AG04449 (cell line): ENCODE measurements at regions of chrX and their contacts with region 1.

Region 1: DNA sequence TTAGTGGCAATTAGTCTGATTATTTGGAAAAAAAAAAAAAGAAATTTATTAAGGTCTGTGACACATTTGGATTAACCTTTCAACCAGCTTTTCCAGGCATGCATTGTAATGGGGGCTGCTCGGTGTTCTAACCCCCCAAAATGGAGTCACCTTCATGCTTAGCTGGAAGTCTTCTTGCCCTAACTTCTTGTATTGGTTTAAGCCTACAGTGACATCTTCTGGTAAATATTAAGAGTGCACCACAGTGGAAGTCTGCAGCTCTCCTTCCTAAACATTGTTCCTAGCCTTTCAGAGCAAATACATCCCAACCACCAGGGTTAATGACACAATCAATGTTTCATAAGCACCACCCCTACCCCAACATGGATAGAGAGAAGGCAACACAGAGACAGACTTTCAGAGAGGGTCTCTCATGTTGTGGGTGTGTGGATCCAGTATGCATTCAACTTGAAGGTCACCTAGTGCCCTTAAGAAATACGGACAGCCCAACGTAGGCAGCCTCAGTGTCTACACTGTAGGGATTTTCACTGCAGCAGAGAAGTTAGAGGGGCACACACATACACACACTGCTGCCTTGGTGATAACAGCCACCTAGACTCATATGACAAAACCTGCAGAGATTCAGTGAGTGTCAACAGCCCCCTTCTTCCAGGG is 142.9 kb upstream of the MBNL3 start:
- DNase-seq: no peak
- H3K4me3 ChIP-seq: no peak overlapping the region
- CTCF ChIP-seq: peak; percentile 17

Region 2: DNA sequence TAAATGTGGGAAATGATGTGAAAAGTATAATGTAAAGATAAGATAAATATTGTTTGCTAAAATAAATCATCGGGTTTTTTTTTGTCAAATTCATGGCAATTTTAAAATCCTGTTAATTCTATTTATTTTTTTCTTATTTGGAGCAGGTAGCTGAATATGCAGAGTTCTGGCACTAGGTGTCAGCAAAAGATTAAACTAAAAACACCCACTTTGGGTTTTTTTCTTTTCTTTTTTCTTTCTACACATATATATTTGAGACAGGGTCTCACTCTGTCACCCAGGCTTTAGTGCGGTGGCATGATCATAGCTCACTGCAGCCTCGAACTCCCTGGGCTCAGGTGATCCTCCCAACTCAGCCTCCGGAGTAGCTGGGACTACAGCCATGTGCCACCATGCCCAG is 405.5 kb before region 1 on chrX:
- CTCF ChIA-PET with region 1: interaction called, 18 read pairs
- POLR2A ChIA-PET with region 1: no interaction called
- DNase-seq: no peak
- H3K4me3 ChIP-seq: no peak overlapping the region
- CTCF ChIP-seq: no peak

Region 3: DNA sequence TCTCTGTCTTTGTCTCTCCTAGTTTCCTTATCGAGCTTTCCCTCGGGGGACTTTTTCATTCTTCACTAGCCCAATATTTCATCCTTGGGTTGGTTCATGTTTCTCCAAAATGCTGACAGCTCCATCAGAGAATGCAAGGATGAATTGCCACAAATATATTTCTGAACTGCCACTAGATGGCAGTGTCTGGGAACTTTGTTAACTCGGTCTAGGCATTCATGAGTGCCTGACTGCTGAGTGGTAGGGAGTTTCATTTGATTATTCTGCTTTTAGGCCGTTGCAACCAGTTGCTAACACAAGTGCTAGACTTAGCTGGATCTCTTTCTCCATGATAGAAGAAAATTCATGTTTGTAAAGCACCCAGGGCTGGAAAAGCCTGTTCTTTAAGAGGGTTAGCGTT is 338.9 kb before region 1 on chrX:
- CTCF ChIA-PET with region 1: interaction called, 22 read pairs
- POLR2A ChIA-PET with region 1: no interaction called
- DNase-seq: peak; percentile 12
- H3K4me3 ChIP-seq: no peak overlapping the region
- CTCF ChIP-seq: peak; percentile 33

Region 4: DNA sequence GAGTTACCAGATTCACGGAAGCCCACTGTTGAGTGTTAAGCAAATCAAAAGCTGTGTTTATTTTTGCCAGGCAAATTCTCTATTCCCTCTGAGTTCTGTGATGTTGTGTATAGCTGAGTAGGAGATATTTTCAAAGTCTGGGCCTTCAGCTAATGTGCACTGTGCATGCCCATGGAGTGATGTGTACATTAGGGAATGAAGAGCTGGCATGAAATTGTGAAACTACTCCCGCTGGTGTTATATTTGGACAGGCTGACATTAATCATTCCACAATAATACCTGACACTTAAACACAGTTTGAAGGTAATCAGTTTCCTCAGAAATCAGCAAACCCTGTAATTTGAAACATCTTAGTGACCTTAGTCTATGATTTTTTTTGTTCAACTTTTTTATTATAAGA is 54.8 kb before region 1 on chrX:
- CTCF ChIA-PET with region 1: no interaction called
- POLR2A ChIA-PET with region 1: no interaction called
- DNase-seq: no peak
- H3K4me3 ChIP-seq: no peak overlapping the region
- CTCF ChIP-seq: no peak

Region 5: DNA sequence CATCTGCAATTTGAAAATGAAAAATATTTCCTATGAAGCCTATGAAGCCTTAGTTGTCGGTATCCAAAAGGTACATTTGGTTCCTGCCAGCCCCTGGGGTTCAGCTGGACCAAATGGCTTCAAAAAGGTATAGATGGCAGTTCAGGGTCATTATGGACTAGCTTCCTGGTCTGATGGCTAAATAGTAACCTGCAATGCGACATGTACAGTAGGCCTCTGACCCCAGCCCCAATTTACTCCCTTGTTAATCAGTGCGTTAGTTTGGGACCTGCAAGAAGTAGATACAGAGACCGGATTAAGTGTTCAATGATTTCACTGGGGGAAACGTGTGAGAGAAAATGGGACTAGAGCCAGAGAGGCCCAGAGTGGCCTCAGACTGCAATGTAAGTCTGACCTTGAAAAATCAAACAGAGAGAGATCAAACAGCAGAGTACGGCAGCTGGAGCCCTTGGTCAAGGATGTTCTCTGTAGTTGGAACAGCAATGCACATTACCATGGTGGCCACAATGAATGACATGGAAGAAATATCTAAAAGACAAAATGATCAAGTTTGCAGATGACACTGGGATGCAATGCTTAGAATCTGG is 27.9 kb before region 1 on chrX:
- CTCF ChIA-PET with region 1: no interaction called
- POLR2A ChIA-PET with region 1: no interaction called
- DNase-seq: no peak
- H3K4me3 ChIP-seq: no peak overlapping the region
- CTCF ChIP-seq: no peak

Region 6: DNA sequence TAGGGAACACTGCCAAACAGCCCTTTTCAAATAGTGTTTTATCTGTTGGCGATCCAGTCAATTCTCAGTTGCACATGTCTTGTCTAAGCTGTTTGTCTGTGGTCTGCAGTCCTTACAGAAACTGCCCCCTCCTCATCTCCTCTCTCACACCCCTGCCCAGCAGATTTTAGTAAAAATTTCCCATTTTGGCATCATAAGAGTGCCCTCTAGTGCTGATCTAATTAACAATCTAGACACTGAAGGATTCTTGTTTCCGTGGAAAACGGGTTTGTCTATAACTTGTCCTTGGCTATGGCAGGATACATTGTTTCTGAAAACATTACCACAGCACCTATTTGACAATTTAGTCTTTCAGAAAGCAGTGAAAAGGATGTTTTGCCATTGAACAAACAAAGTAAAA is 84.3 kb after region 1 on chrX:
- CTCF ChIA-PET with region 1: interaction called, 63 read pairs
- POLR2A ChIA-PET with region 1: no interaction called
- DNase-seq: no peak
- H3K4me3 ChIP-seq: no peak overlapping the region
- CTCF ChIP-seq: peak; percentile 3

Region 7: GRCh38 chrX:133232331-133232730 is 600.6 kb after region 1 on chrX:
- CTCF ChIA-PET with region 1: no interaction called
- POLR2A ChIA-PET with region 1: no interaction called
- DNase-seq: no peak
- H3K4me3 ChIP-seq: no peak overlapping the region
- CTCF ChIP-seq: no peak